CD4-positive, alpha-beta T cell (primary cell): ENCODE measurements at regions of chr17 and their contacts with region 1.

Region 1: DNA sequence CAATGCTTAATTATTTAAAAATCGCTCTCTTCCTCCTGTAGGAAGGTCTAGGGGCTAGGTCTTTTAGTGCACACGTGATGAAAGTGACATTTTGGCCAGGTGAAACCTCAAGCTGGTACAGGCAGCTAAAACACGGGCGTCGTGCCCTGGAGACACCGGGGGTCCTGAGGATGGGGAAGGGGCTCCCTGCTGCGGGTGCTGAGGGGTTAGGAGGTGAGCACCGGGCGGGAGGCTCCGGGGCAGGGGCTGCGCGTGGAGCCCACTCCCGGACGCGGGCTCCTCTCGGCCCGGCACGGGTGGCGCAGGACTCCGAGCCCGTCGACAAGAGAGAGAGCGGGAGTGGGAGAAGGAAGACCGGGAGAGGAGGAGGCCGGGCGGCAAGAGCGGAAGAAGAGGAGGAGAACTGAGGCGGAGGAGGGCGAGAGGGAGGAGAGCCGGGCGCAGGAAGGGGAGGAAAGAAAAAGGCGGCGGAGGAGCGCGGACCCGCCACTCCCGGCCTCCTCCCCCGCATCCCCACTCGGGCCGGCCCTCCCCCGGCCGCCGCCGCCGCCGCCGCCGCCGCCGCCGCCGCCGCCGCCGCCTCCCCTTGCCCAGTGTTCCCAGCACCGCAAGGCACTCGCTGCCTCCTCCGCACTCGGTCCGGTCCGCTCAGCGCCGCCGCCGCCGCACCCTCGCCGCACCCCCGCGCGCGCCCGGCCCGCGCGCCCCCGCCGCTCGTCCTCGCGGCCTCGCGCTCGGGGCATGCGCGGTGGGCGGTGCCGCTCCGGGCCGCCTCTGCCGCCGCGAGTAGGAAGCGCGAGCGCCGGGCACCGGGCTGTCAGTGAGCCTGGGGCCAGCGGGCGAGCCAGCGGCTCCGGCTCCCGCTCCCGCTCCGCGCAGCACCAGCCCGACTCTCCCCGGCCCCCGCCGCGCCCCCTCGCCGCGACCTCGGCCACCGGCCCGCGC is at the start of gene PRKCA:
- DNase-seq: peak; percentile 51 to 90 (median 68)
- ATAC-seq: peak; percentile 74
- H3K4me3 ChIP-seq: peak within 1 kb of the TSS; percentile 82
- H3K4me3 Mint-ChIP-seq: peak within 1 kb of the TSS; percentile 100
- H3K27ac ChIP-seq: peak within 1 kb of the TSS in 1 of 2 donors; percentile 56
- H3K27ac Mint-ChIP-seq: peak within 1 kb of the TSS; percentile 85
- H3K4me1 ChIP-seq: peaks cover 26% of the 10 kb centered on the region
- H3K4me1 Mint-ChIP-seq: peaks cover 70% of the 10 kb centered on the region
- H3K27me3 ChIP-seq: no peaks in the 10 kb centered on the region
- H3K27me3 Mint-ChIP-seq: no peaks in the 10 kb centered on the region
- CTCF ChIP-seq: no peak
- total RNA-seq, gene PRKCA: 84.8 to 88.6 TPM

Region 2: DNA sequence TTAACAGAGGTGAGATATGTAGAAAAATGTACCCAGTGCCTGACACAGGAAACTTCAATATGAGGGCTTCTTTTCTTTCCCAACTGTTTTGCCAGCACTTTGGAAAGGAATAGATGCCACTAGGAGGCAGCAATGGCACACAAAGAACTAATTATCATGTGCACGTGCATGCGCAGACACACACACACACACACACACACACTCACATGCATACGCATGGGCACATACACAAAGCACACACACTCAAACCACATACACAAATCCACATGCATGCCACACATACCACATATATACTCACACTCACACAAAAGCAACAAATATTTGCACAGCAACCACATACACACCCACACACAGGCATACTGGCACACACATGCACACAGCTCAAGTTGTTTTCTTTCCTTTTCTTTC is 101.4 kb before region 1 on chr17:
- CTCF ChIA-PET with region 1: interaction called, 4 read pairs
- POLR2A ChIA-PET with region 1: no interaction called
- intact Hi-C with region 1: loop called in 1 of 2 experiments (anchors 5 kb)
- DNase-seq: peak in 11 of 14 experiments; percentile 4 to 82 (median 41)
- ATAC-seq: peak; percentile 45
- H3K4me3 ChIP-seq: no peak overlapping the region
- H3K4me3 Mint-ChIP-seq: peak overlapping the region; percentile 23
- H3K27ac ChIP-seq: no peak overlapping the region
- H3K27ac Mint-ChIP-seq: peak overlapping the region; percentile 32
- H3K4me1 ChIP-seq: peaks cover 18% of the 10 kb centered on the region
- H3K4me1 Mint-ChIP-seq: peaks cover 22% of the 10 kb centered on the region
- H3K27me3 ChIP-seq: no peaks in the 10 kb centered on the region
- H3K27me3 Mint-ChIP-seq: no peaks in the 10 kb centered on the region
- CTCF ChIP-seq: peak; percentile 67

Region 3: DNA sequence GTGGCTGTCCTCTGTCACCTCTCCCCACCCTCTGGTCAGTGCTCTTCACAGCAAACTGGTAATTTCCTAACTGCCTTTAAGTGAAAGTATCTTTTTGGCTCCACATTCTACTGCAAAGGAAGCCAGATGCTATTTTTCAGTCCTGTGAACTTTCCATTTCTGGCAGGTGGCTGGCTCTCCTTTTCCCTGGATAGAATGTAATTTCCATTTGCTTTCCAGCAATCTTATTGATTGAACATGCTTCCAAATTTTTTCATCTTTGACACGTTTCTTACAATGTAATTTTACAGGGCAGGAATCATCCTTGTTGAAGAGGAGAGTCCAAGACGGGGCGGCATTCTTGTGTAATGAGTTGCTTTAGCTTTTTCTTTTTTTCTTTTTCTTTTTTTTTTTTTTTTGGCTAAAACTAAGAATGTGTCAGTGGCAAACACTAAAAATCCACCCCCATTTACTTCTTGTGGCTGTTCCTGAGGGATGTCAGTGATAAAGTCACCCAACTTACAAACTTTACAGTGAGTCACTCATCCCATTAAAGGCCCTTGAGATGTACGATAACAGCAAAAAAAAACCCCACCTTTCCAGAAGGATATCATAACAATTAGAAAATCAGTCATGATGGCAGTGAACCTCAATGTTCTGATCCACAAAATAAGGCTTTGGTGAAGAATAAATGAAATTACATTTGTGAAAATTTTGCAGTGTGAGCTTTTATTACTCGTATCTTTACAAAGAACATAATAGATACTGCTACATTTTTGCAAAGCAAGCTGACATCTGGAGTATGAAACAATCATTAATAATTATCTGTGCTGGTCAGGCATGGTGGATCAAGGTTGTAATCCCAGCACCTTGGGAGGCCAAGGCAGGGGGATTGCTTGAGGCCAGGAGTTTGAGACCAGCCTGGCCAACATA is 29.0 kb before region 1 on chr17:
- CTCF ChIA-PET with region 1: no interaction called
- POLR2A ChIA-PET with region 1: no interaction called
- intact Hi-C with region 1: no loop called
- DNase-seq: no peak
- ATAC-seq: no peak
- H3K4me3 ChIP-seq: no peak overlapping the region
- H3K4me3 Mint-ChIP-seq: no peak overlapping the region
- H3K27ac ChIP-seq: no peak overlapping the region
- H3K27ac Mint-ChIP-seq: no peak overlapping the region
- H3K4me1 ChIP-seq: no peaks in the 10 kb centered on the region
- H3K4me1 Mint-ChIP-seq: no peaks in the 10 kb centered on the region
- H3K27me3 ChIP-seq: no peaks in the 10 kb centered on the region
- H3K27me3 Mint-ChIP-seq: no peaks in the 10 kb centered on the region
- CTCF ChIP-seq: no peak

Region 4: DNA sequence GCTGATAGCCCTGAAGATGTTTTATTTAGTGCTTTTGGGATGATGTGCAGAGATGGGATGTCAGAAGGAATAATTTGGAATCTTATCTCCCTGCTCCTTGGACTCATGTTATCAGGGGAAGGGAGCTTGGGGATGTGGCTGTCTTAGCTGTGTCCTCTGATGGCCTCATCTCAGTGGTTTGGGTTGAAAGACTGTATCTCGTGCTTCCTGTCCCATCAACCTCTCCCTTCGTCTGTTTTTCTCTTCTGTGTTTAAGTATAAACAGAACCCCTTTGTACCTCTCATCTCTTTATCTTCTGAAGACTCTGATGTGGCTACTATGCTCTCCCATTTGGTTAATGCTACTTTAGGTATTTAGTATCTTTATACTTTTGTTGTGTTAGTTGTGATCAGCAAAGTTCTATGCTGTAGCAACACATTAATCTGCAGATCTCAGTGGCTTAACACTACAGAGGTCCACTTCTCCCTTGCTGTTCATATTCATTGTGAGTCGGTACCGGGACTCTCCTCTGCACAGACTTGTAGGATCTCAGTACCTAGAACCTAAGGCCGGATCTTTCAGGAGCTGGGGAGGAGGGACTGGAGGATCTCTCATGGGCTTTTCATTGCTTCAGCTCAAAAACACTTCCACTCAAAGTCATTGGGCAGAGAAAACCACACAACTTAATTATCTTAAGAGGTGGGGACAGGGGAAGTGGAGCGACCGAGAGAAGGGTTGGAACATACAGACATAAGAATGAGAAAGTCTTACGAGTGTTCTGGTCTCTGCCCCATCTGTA is 29.2 kb after region 1 on chr17:
- CTCF ChIA-PET with region 1: no interaction called
- POLR2A ChIA-PET with region 1: interaction called, 44 read pairs
- intact Hi-C with region 1: loop called (anchors 2 kb)
- DNase-seq: peak in 9 of 14 experiments; percentile 9 to 71 (median 20)
- ATAC-seq: peak; percentile 80
- H3K4me3 ChIP-seq: peak overlapping the region; percentile 33
- H3K4me3 Mint-ChIP-seq: peak overlapping the region; percentile 86
- H3K27ac ChIP-seq: peak overlapping the region; percentile 20 to 49
- H3K27ac Mint-ChIP-seq: peak overlapping the region; percentile 97
- H3K4me1 ChIP-seq: peaks cover 61% of the 10 kb centered on the region
- H3K4me1 Mint-ChIP-seq: peaks cover 89% of the 10 kb centered on the region
- H3K27me3 ChIP-seq: no peaks in the 10 kb centered on the region
- H3K27me3 Mint-ChIP-seq: no peaks in the 10 kb centered on the region
- CTCF ChIP-seq: no peak

Region 5: GRCh38 chr17:66386498-66387365 is 84.7 kb after region 1 on chr17:
- CTCF ChIA-PET with region 1: no interaction called
- POLR2A ChIA-PET with region 1: interaction called, 3 read pairs
- intact Hi-C with region 1: loop called in 1 of 2 experiments (anchors 5 kb)
- DNase-seq: no peak
- ATAC-seq: no peak
- H3K4me3 ChIP-seq: no peak overlapping the region
- H3K4me3 Mint-ChIP-seq: no peak overlapping the region
- H3K27ac ChIP-seq: no peak overlapping the region
- H3K27ac Mint-ChIP-seq: peak overlapping the region; percentile 3
- H3K4me1 ChIP-seq: peaks cover 12% of the 10 kb centered on the region
- H3K4me1 Mint-ChIP-seq: peaks cover 73% of the 10 kb centered on the region
- H3K27me3 ChIP-seq: no peaks in the 10 kb centered on the region
- H3K27me3 Mint-ChIP-seq: no peaks in the 10 kb centered on the region
- CTCF ChIP-seq: no peak

Region 6: DNA sequence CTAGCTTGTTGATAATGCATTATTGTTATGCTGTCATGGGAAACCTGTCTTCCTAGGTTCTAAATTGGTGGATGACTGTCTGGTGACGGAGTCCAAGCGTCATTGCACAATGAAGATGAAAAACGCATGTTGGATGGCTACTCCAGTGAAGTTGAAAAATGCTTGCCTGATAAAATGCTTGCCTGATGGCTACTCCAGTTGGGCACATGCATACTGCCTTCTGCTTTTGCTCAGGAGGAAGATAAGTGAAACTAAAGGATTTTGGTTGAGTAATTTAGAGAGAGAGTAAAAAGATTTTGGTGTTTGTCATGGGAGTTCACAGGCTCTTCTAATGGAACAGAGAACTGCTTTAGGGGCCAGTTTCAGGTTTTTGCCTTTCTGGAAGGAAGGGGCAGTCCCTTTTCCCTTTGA is 118.9 kb after region 1 on chr17:
- CTCF ChIA-PET with region 1: no interaction called
- POLR2A ChIA-PET with region 1: no interaction called
- intact Hi-C with region 1: loop called in 1 of 2 experiments (anchors 5 kb)
- DNase-seq: no peak
- ATAC-seq: no peak
- H3K4me3 ChIP-seq: no peak overlapping the region
- H3K4me3 Mint-ChIP-seq: no peak overlapping the region
- H3K27ac ChIP-seq: no peak overlapping the region
- H3K27ac Mint-ChIP-seq: peak overlapping the region; percentile 25
- H3K4me1 ChIP-seq: peaks cover 15% of the 10 kb centered on the region
- H3K4me1 Mint-ChIP-seq: peaks cover 64% of the 10 kb centered on the region
- H3K27me3 ChIP-seq: no peaks in the 10 kb centered on the region
- H3K27me3 Mint-ChIP-seq: no peaks in the 10 kb centered on the region
- CTCF ChIP-seq: no peak

Region 7: GRCh38 chr17:66474258-66474657 is 172.2 kb after region 1 on chr17:
- CTCF ChIA-PET with region 1: no interaction called
- POLR2A ChIA-PET with region 1: no interaction called
- intact Hi-C with region 1: no loop called
- DNase-seq: no peak
- ATAC-seq: no peak
- H3K4me3 ChIP-seq: no peak overlapping the region
- H3K4me3 Mint-ChIP-seq: no peak overlapping the region
- H3K27ac ChIP-seq: no peak overlapping the region
- H3K27ac Mint-ChIP-seq: no peak overlapping the region
- H3K4me1 ChIP-seq: no peaks in the 10 kb centered on the region
- H3K4me1 Mint-ChIP-seq: peaks cover 54% of the 10 kb centered on the region
- H3K27me3 ChIP-seq: no peaks in the 10 kb centered on the region
- H3K27me3 Mint-ChIP-seq: no peaks in the 10 kb centered on the region
- CTCF ChIP-seq: no peak